Esophagus squamous epithelium (tissue), 5 donors: ENCODE measurements at regions of chr12 and their contacts with region 1.

Region 1: GRCh38 chr12:95815635-95816212 is 25.2 kb upstream of the NTN4 start:
- DNase-seq: no peak
- H3K4me3 ChIP-seq: no peak overlapping the region
- H3K27ac ChIP-seq: no peak overlapping the region
- H3K4me1 ChIP-seq: no peaks in the 10 kb centered on the region
- H3K27me3 ChIP-seq: no peaks in the 10 kb centered on the region
- CTCF ChIP-seq: peak; percentile 31 to 85 (median 74)
- POLR2A ChIP-seq: no peak

Region 2: GRCh38 chr12:95582230-95583058 is 233.3 kb before region 1 on chr12:
- intact Hi-C with region 1: loop called (anchors 5 kb)
- DNase-seq: no peak
- H3K4me3 ChIP-seq: no peak overlapping the region
- H3K27ac ChIP-seq: no peak overlapping the region
- H3K4me1 ChIP-seq: no peaks in the 10 kb centered on the region
- H3K27me3 ChIP-seq: no peaks in the 10 kb centered on the region
- CTCF ChIP-seq: peak in 4 of 6 experiments; percentile 17 to 45 (median 31)
- POLR2A ChIP-seq: no peak

Region 3: DNA sequence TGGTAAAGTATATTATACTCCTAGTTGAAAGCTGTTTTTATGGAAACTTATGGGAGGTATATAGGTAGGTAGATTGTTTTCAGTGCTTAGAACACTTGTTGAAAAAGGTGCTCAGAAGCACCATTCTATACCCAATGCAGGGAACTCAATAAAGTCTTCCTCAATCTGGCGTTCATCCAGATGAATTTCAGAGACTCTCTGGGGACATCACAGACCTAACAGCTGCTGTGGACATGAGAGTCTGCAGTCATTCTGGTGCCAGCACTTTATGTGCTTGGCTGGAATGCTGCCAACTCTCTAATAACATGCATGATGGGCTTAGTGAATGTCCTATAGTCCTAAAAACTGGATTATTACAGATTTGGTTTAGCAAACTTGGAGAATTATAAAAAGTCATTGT is 141.1 kb before region 1 on chr12:
- intact Hi-C with region 1: no loop called
- DNase-seq: no peak
- H3K4me3 ChIP-seq: no peak overlapping the region
- H3K27ac ChIP-seq: no peak overlapping the region
- H3K4me1 ChIP-seq: peaks cover 0 to 14% (median 0%) of the 10 kb centered on the region in 3 donors
- H3K27me3 ChIP-seq: no peaks in the 10 kb centered on the region
- CTCF ChIP-seq: no peak
- POLR2A ChIP-seq: no peak